CD14-positive monocyte (primary cell): ENCODE measurements at regions of chr1 and their contacts with region 1.

Region 1: GRCh38 chr1:220056374-220056773 is 10.1 kb upstream of the EPRS1 start:
- DNase-seq: no peak
- H3K4me3 ChIP-seq: no peak overlapping the region
- H3K4me3 Mint-ChIP-seq: no peak overlapping the region
- H3K27ac ChIP-seq: no peak overlapping the region
- H3K27ac Mint-ChIP-seq: no peak overlapping the region
- H3K4me1 ChIP-seq: no peaks in the 10 kb centered on the region
- H3K4me1 Mint-ChIP-seq: no peaks in the 10 kb centered on the region
- H3K27me3 ChIP-seq: no peaks in the 10 kb centered on the region
- H3K27me3 Mint-ChIP-seq: no peaks in the 10 kb centered on the region
- CTCF ChIP-seq: no peak

Region 2: DNA sequence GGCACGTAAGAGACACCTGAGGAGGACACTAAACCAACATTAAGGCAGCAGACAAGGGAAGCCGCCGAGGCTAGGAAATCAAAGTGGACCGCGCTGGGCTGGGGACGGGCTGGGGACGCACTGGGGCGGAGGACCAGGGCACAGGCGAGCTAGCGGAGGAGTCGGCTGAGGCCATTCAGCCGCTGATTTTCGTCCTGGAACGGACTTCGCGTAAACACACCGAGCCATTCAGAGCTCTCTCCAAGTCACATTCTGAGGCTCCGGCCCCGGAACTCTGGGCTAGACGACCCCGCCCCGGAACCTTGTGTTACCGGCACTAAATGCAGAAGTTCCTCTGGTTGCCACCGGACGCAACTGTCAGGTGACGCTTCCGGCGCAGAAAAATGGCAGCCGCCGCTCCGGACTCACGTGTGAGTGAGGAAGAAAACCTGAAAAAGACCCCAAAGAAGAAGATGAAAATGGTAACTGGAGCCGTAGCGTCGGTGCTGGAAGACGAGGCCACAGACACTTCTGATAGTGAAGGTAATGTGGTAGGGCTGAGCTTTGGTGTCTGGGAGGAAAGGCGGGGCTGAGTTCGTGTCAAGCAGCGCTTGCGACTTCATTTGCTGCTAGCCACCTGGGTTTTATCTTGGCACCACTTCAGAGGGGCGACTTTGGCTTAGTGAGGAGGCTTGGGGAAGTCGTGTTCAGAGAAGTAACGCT is 1771.3 kb before region 1 on chr1 and contains the start of gene RRP15:
- intact Hi-C with region 1: loop called in 1 of 2 experiments (anchors 10 kb)
- DNase-seq: peak; percentile 79 to 84 (median 81)
- H3K4me3 ChIP-seq: peak within 1 kb of the TSS; percentile 96 to 97 (median 97)
- H3K4me3 Mint-ChIP-seq: peak within 1 kb of the TSS; percentile 94 to 97
- H3K27ac ChIP-seq: peak within 1 kb of the TSS; percentile 60 to 90
- H3K27ac Mint-ChIP-seq: peak within 1 kb of the TSS; percentile 89 to 96 (median 95)
- H3K4me1 ChIP-seq: peaks cover 15 to 19% of the 10 kb centered on the region in 2 donors
- H3K4me1 Mint-ChIP-seq: peaks cover 18% of the 10 kb centered on the region
- H3K27me3 ChIP-seq: no peaks in the 10 kb centered on the region
- H3K27me3 Mint-ChIP-seq: peaks cover 5 to 11% (median 8%) of the 10 kb centered on the region in 3 donors
- CTCF ChIP-seq: no peak
- polyA plus RNA-seq, gene RRP15: 0.81 to 7.6 (median 4.6) TPM

Region 3: DNA sequence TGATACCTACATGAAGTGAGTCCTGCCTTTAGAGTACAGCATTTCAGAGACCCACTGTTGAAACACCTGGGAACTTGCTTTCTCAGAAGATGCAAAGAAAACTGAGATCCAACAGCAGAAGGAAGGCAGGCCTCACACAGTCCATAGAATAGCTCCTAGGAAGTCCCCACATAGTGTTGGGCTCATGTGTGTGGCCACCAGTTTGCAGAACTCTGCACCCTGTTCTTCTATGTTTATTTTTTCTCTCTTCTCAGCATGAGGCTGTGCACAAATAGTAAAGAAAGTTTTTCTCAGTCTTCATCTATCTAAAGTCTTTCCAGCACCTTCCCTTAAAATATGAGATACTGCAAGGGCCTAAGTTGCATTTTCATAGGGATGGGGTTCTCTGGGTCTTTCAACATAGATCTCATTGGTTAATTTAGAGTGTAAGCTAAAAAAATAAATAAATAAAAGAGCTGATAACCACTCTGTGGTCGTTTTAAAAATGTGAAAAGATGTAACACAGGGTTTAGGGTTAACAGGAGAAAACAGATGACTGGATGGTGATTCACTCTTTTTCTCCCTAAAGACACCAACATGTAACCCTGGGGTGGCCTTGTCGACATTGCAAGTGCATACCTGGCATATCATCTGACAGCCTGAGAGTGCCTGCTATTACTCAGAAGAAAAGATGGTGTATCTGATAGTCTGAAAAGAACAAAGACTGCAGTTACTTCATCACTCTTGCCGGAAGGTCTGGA is 538.0 kb before region 1 on chr1:
- intact Hi-C with region 1: no loop called
- DNase-seq: no peak
- H3K4me3 ChIP-seq: no peak overlapping the region
- H3K4me3 Mint-ChIP-seq: no peak overlapping the region
- H3K27ac ChIP-seq: no peak overlapping the region
- H3K27ac Mint-ChIP-seq: no peak overlapping the region
- H3K4me1 ChIP-seq: peaks cover 3 to 4% of the 10 kb centered on the region in 2 donors
- H3K4me1 Mint-ChIP-seq: peaks cover 9% of the 10 kb centered on the region
- H3K27me3 ChIP-seq: no peaks in the 10 kb centered on the region
- H3K27me3 Mint-ChIP-seq: peaks cover 2 to 3% (median 3%) of the 10 kb centered on the region in 3 donors
- CTCF ChIP-seq: no peak

Region 4: GRCh38 chr1:220241072-220241663 is 184.8 kb after region 1 on chr1:
- intact Hi-C with region 1: no loop called
- DNase-seq: no peak
- H3K4me3 ChIP-seq: no peak overlapping the region
- H3K4me3 Mint-ChIP-seq: no peak overlapping the region
- H3K27ac ChIP-seq: no peak overlapping the region
- H3K27ac Mint-ChIP-seq: no peak overlapping the region
- H3K4me1 ChIP-seq: no peaks in the 10 kb centered on the region
- H3K4me1 Mint-ChIP-seq: peaks cover 6% of the 10 kb centered on the region
- H3K27me3 ChIP-seq: no peaks in the 10 kb centered on the region
- H3K27me3 Mint-ChIP-seq: no peaks in the 10 kb centered on the region
- CTCF ChIP-seq: no peak